ENCODE measurements at regions of chr17 and their contacts with region 1.

Region 1: DNA sequence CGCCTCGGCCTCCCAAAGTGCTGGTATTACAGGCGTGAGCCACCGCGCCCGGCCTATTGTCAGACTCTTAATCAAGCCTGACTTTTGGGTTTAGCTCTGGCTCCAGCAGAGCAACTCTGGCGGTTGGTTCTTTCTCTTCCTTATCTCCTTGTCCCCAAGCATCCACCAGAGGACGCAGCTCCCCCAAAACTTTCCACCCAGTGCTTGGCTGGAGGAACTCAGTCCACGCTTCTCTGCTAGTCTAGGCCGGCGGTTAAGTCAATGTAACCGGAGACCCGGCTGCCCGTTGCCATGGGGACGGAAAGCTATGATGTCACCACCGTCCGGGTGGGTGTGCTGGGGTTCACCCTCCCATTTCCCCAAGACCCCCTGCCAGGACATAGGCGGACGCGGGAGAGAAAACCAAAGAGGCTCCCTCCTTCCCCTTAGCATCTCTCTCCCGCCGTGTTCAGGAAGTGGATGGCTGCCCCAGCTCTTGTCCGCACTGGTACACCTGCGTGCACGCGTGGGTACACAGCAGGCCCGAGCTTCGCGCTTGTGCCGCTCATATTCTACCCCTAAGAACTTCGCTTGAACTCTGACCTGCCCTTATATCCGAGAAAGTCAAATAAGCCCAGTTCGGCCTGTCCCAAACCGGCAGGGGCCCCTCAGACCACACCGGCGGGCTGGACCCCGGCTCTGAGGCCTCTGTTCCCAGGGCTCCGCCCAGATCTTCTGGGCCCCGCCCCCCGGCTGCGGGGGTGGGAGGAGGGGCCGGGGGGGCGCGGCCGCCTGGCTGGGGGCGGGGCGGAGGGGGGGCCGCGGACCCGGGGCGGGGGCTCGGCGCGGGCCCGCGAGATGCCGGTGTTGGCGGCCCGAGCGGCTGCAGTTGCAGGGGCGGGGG is at the start of gene RND2:
- DNase-seq: peak; percentile 80 to 82
- H3K4me3 ChIP-seq: peak within 1 kb of the TSS; percentile 58
- H3K27ac ChIP-seq: no peak within 1 kb of the TSS
- H3K4me1 ChIP-seq: peaks cover 21% of the 10 kb centered on the region
- H3K27me3 ChIP-seq: no peaks in the 10 kb centered on the region
- CTCF ChIP-seq: peak; percentile 73
- total RNA-seq, gene RND2: 0.26 and 0.43 TPM in 2 replicates

Region 2: DNA sequence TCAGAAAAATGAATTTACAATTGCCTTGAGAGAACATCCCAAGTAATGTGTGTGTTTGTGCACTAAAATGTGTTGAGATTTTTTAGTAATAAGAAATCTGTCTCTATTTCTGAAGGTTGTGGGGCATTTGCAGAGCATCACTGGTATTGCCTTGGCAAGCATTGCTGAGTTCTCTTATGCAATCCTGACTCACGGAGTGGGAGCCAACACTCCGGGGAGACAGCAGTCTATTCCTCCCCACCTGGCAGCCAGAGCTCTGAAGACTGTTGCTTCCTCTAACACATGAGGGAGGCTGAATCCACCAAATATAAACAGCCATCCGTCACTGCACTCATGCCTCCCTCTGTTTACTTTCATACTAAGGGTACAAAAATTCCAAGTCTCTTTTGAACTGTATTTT is 215.4 kb before region 1 on chr17:
- CTCF ChIA-PET with region 1: no interaction called
- POLR2A ChIA-PET with region 1: no interaction called
- intact Hi-C with region 1: no loop called
- DNase-seq: no peak
- H3K4me3 ChIP-seq: no peak overlapping the region
- H3K27ac ChIP-seq: no peak overlapping the region
- H3K4me1 ChIP-seq: no peaks in the 10 kb centered on the region
- H3K27me3 ChIP-seq: no peaks in the 10 kb centered on the region
- CTCF ChIP-seq: no peak

Region 3: GRCh38 chr17:42997984-42998938 is 26.4 kb before region 1 on chr17 and contains the start of gene RPL27:
- CTCF ChIA-PET with region 1: no interaction called
- POLR2A ChIA-PET with region 1: interaction called, 10 read pairs
- intact Hi-C with region 1: no loop called
- DNase-seq: peak; percentile 93 to 99
- H3K4me3 ChIP-seq: peak within 1 kb of the TSS; percentile 91
- H3K27ac ChIP-seq: peak within 1 kb of the TSS; percentile 97
- H3K4me1 ChIP-seq: peaks cover 33% of the 10 kb centered on the region
- H3K27me3 ChIP-seq: no peaks in the 10 kb centered on the region
- CTCF ChIP-seq: peak; percentile 85
- total RNA-seq, gene RPL27: 593 and 950 TPM in 2 replicates

Region 4: DNA sequence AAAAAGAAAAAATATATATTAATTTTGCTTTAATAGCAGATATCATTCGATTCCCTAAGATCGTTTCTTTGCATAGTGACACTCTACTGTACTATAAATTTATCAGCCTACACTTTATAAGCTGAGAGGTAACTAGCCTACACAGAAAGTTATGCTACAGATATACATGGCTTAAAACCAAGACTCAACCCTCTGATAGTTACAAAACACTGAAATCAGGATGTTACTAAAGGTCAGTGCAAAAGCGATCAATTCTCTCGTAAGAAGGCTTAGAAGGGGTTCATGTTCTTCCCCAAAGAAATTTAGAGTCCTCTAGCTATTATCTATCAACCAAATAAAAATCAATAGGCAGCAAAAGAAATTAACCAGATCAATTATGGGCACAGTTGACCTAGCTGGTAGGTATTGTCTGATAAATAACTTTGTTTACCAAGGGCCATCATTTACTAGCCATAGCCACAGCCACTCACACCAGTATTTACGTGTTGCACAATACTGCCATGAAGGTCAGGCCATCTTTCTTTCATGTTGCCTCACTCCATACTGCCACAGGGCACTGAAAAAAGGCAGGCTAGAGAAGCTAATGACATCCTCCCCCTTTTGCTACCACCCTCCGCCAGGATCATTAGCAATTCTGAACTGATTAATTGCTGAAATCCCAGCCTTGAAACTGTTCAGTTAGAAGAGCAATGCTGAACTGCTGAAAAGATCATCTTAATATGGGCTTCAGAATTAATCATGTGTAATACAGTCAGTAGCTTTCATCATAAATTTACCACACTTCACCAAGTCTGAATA is 44.1 kb after region 1 on chr17:
- CTCF ChIA-PET with region 1: no interaction called
- POLR2A ChIA-PET with region 1: no interaction called
- intact Hi-C with region 1: no loop called
- DNase-seq: no peak
- H3K4me3 ChIP-seq: no peak overlapping the region
- H3K27ac ChIP-seq: peak overlapping the region; percentile 1; the same call in 1 of the 2 replicates
- H3K4me1 ChIP-seq: no peaks in the 10 kb centered on the region
- H3K27me3 ChIP-seq: no peaks in the 10 kb centered on the region
- CTCF ChIP-seq: no peak

Region 5: GRCh38 chr17:43125133-43125966 is 100.7 kb after region 1 on chr17 and contains the start of gene BRCA1:
- CTCF ChIA-PET with region 1: no interaction called
- POLR2A ChIA-PET with region 1: no interaction called
- intact Hi-C with region 1: loop called (anchors 1 kb)
- DNase-seq: peak; percentile 91 to 100
- H3K4me3 ChIP-seq: peak within 1 kb of the TSS; percentile 87
- H3K27ac ChIP-seq: peak within 1 kb of the TSS; percentile 98
- H3K4me1 ChIP-seq: no peaks in the 10 kb centered on the region; the same call in none of the 2 replicates
- H3K27me3 ChIP-seq: no peaks in the 10 kb centered on the region
- CTCF ChIP-seq: no peak
- total RNA-seq, gene BRCA1: 40.9 and 52.0 TPM in 2 replicates

Region 6: GRCh38 chr17:43360739-43361505 is 336.3 kb after region 1 on chr17:
- CTCF ChIA-PET with region 1: no interaction called
- POLR2A ChIA-PET with region 1: interaction called, 32 read pairs
- intact Hi-C with region 1: loop called (anchors 5 kb)
- DNase-seq: peak; percentile 88 to 99
- H3K4me3 ChIP-seq: peak overlapping the region; percentile 64
- H3K27ac ChIP-seq: peak overlapping the region; percentile 92
- H3K4me1 ChIP-seq: peaks cover 44% of the 10 kb centered on the region
- H3K27me3 ChIP-seq: no peaks in the 10 kb centered on the region
- CTCF ChIP-seq: no peak

Measured in PC-9 (cell line).